ENCODE measurements at regions of chr6 and their contacts with region 1.

Region 1: GRCh38 chr6:110944681-110945151 is 13.8 kb upstream of the GTF3C6 start:
- DNase-seq: peak; percentile 28 to 49
- H3K4me3 ChIP-seq: no peak overlapping the region
- H3K27ac ChIP-seq: no peak overlapping the region
- H3K4me1 ChIP-seq: no peaks in the 10 kb centered on the region
- H3K27me3 ChIP-seq: no peaks in the 10 kb centered on the region
- CTCF ChIP-seq: no peak
- POLR2A ChIP-seq: no peak

Region 2: DNA sequence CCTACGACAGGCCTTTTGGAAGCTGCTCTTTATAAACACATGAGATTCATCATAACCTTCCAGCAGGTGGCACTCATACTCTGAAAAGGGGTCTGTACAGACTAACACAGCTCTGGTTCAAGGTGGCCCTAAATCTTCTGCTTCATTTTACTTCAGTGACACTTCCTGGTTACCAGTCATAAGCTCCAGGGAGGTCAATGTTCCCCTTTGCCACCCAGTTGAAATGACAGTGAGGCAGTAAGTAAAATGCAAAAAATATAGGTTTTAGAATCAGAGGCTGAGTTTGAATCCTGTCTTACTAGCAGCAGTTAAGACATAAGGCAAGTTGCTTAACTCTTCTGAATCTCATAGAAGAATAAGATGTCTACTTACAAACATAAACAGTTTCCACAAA is 262.3 kb before region 1 on chr6:
- intact Hi-C with region 1: loop called (anchors 5 kb)
- DNase-seq: peak; percentile 46 to 60
- H3K4me3 ChIP-seq: no peak overlapping the region
- H3K27ac ChIP-seq: no peak overlapping the region
- H3K4me1 ChIP-seq: peaks cover 0 to 6% of the 10 kb centered on the region in 2 donors
- H3K27me3 ChIP-seq: no peaks in the 10 kb centered on the region
- CTCF ChIP-seq: peak in 5 of 6 experiments; percentile 50 to 85 (median 67)
- POLR2A ChIP-seq: no peak

Region 3: GRCh38 chr6:111076024-111076695 is 131.4 kb after region 1 on chr6:
- intact Hi-C with region 1: no loop called
- DNase-seq: no peak
- H3K4me3 ChIP-seq: no peak overlapping the region
- H3K27ac ChIP-seq: no peak overlapping the region
- H3K4me1 ChIP-seq: no peaks in the 10 kb centered on the region
- H3K27me3 ChIP-seq: no peaks in the 10 kb centered on the region
- CTCF ChIP-seq: no peak
- POLR2A ChIP-seq: no peak

Measured in thyroid gland (tissue), 4 donors.